ENCODE measurements at regions of chr20 and their contacts with region 1.

Region 1: DNA sequence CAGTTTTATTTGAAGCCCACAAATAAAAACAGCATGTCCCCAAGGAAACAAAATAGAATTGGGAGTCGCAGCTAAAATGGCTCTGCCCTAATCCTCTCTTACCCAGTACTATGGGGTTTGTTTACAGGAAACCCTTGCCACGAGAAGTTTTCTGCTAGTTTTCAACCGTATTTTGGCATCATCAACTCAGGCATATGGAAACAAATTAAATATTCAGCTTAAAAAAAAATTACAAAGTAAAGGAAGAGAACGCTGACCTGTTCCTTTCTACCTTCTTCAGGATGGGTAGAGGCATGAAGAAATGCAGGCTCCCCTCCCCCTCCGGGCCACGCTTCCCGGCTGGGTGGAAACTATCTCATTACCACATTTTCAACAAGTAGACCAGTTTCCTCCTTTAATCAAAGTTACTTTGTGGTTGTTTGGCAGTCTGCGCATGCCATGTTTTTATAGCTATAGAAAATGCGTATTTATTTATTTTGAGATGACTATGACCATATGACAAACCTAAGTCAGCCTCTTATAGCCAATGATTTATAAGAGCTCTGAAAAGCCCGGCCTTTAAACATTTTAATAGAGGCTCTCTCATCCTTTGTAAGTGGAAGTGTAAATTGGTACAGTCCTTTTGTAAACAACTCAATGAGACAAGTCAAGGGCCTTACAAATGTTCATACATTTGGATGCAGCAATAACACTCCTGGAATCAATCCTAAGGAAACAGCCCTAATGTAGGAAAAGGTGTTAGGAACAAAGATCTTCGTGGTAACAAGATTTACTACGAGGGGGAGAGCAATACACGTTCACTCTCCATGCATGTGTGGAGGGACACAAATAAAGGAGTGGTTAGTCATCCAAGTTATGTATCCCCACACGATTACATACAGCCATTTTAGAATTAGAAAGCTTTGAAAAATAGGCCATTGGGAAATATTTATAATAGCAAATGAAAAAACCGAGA is 16.1 kb upstream of the ZNF217 start:
- DNase-seq: peak; percentile 72
- H3K4me3 Mint-ChIP-seq: peak overlapping the region; percentile 82
- H3K27ac Mint-ChIP-seq: peak overlapping the region; percentile 97
- H3K4me1 Mint-ChIP-seq: peaks cover 33% of the 10 kb centered on the region
- H3K27me3 Mint-ChIP-seq: no peaks in the 10 kb centered on the region

Region 2: GRCh38 chr20:53594068-53595017 is 15.4 kb before region 1 on chr20:
- intact Hi-C with region 1: loop called (anchors 1 kb)
- DNase-seq: peak; percentile 92
- H3K4me3 Mint-ChIP-seq: peak overlapping the region; percentile 85
- H3K27ac Mint-ChIP-seq: peak overlapping the region; percentile 92
- H3K4me1 Mint-ChIP-seq: peaks cover 49% of the 10 kb centered on the region
- H3K27me3 Mint-ChIP-seq: no peaks in the 10 kb centered on the region

Region 3: GRCh38 chr20:53643031-53643832 is 33.5 kb after region 1 on chr20:
- intact Hi-C with region 1: loop called (anchors 2 kb)
- DNase-seq: peak; percentile 67
- H3K4me3 Mint-ChIP-seq: peak overlapping the region; percentile 76
- H3K27ac Mint-ChIP-seq: peak overlapping the region; percentile 95
- H3K4me1 Mint-ChIP-seq: peaks cover 33% of the 10 kb centered on the region
- H3K27me3 Mint-ChIP-seq: no peaks in the 10 kb centered on the region

Measured in activated T-helper 2 cell treated with anti-CD3 and anti-CD28 coated beads, Interferon-gamma antibody, Interleukin-2, Interleukin-4, amounts not matched to agents 10 μg/mL and 5 μg/mL and 100 μg/mL, durations not matched to agents 14 hours and 24 hours and 36 hours (primary cell).